BJ (cell line): ENCODE measurements at regions of chr14 and their contacts with region 1.

Region 1: GRCh38 chr14:59037086-59037485 is 151.4 kb upstream of the DAAM1 start:
- DNase-seq: no peak
- H3K4me3 ChIP-seq: no peak overlapping the region
- H3K27me3 ChIP-seq: no peaks in the 10 kb centered on the region
- CTCF ChIP-seq: no peak

Region 2: GRCh38 chr14:58367296-58367695 is 669.8 kb before region 1 on chr14:
- CTCF ChIA-PET with region 1: no interaction called
- POLR2A ChIA-PET with region 1: no interaction called
- DNase-seq: no peak
- H3K4me3 ChIP-seq: no peak overlapping the region
- H3K27me3 ChIP-seq: no peaks in the 10 kb centered on the region
- CTCF ChIP-seq: no peak

Region 3: DNA sequence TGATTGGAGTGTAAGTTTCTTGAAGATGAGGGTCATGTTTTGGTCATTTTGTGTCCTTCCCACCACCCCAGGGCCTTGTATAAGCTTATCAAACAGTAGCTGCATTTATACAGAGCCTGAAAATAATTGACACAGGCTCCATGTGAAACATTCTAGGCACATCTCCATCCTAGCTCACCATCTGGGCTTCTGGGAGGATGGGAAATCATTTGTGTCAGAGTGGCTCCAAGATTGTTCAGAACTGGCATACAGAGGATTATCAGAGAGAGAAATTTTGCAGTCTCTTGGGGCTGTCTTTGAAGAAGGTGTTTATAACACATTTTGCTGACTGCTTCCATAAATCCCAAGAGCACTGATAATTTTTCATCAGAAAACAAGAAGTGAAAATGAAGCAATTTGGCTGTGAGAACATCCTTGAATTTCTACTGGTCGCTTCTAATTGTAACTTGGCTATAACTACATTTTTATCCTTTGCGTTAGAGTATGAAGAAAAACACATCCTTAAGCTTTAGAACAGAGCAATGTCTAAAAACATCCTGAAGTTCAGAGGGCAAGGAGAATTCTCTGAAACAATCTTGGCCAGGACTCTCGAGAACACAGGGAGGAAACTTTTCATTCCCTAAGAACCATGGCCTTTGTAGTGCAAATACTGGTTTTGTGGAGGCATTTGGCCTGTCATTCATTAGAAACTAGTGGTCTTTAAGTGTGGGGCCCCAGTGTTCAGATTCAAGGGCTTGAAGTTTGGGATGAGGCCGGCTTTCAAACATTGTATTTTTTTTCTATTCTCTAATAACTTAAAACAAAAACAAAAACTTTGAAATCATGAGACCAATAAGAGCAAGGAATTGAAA is 248.2 kb before region 1 on chr14:
- CTCF ChIA-PET with region 1: no interaction called
- POLR2A ChIA-PET with region 1: no interaction called
- DNase-seq: no peak
- H3K4me3 ChIP-seq: no peak overlapping the region
- H3K27me3 ChIP-seq: peaks cover 13% of the 10 kb centered on the region
- CTCF ChIP-seq: no peak

Region 4: DNA sequence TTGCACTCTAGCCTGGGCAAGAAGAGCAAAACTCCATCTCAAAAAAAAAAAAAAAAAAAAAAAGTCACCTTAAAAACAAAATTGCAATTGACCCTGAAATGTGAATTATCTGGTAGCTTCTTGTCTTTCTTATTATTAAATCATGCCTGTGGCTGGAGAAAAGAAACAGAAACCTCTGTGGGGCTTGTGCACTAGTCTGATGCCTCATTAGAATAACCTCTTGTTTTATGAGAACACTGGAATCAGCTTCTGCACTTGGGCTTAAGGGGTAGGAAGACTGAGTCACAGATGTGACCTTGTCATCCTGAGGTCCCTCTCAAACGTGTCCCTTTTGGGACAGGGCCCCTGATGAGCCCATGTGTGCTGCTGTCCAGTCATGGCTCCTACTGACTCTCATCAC is 161.5 kb before region 1 on chr14:
- CTCF ChIA-PET with region 1: no interaction called
- POLR2A ChIA-PET with region 1: interaction called, 13 read pairs
- DNase-seq: no peak
- H3K4me3 ChIP-seq: no peak overlapping the region
- H3K27me3 ChIP-seq: no peaks in the 10 kb centered on the region
- CTCF ChIP-seq: no peak